ENCODE measurements at regions of chr6 and their contacts with region 1.

Region 1: GRCh38 chr6:15327271-15327670 is 81.4 kb downstream of the JARID2 start:
- DNase-seq: peak; percentile 79
- H3K4me3 Mint-ChIP-seq: no peak overlapping the region
- H3K27ac Mint-ChIP-seq: peak overlapping the region; percentile 85
- H3K4me1 Mint-ChIP-seq: peaks cover 88% of the 10 kb centered on the region
- H3K27me3 Mint-ChIP-seq: no peaks in the 10 kb centered on the region

Region 2: DNA sequence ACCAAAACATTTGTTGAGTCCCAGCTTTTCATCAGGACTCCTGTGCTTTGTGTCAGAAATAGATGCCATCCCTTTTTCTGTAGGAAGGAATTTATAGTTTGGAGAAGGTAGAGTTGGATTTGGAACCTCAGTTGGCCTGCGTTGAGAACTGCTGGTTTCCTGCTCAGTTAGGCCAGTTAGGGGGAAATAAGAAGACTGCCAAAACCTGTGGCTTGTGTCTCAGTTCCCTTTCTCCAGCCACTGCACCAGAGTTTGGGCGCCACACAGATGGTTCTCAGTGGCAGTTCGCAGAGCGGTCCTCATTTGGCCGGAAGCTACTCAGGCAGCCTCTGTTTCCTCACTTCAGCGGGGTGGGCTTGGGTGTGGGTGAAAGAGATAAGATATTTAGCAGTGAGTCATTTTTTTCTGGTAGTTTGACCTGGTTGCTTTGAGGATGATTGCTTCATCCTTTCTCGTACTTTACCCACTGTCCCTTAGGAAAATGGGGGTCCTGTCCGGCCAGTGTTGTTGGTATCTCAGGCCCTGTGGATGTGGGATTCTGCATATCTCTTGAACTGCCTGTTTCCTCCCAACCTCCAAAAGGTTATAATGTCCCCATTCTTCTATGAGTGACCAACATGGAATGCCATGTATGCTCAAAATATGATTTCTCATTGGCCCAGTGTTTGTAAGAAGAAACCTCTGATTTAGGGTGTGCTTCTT is 27.7 kb before region 1 on chr6:
- CTCF ChIA-PET with region 1: interaction called, 5 read pairs
- intact Hi-C with region 1: loop called (anchors 2 kb)
- DNase-seq: peak; percentile 36
- H3K4me3 Mint-ChIP-seq: no peak overlapping the region
- H3K27ac Mint-ChIP-seq: no peak overlapping the region
- H3K4me1 Mint-ChIP-seq: peaks cover 82% of the 10 kb centered on the region
- H3K27me3 Mint-ChIP-seq: no peaks in the 10 kb centered on the region

Region 3: GRCh38 chr6:15389765-15390723 is 62.8 kb after region 1 on chr6:
- CTCF ChIA-PET with region 1: interaction called, 6 read pairs
- intact Hi-C with region 1: loop called (anchors 2 kb)
- DNase-seq: peak; percentile 25
- H3K4me3 Mint-ChIP-seq: no peak overlapping the region
- H3K27ac Mint-ChIP-seq: no peak overlapping the region
- H3K4me1 Mint-ChIP-seq: peaks cover 72% of the 10 kb centered on the region
- H3K27me3 Mint-ChIP-seq: no peaks in the 10 kb centered on the region

Region 4: DNA sequence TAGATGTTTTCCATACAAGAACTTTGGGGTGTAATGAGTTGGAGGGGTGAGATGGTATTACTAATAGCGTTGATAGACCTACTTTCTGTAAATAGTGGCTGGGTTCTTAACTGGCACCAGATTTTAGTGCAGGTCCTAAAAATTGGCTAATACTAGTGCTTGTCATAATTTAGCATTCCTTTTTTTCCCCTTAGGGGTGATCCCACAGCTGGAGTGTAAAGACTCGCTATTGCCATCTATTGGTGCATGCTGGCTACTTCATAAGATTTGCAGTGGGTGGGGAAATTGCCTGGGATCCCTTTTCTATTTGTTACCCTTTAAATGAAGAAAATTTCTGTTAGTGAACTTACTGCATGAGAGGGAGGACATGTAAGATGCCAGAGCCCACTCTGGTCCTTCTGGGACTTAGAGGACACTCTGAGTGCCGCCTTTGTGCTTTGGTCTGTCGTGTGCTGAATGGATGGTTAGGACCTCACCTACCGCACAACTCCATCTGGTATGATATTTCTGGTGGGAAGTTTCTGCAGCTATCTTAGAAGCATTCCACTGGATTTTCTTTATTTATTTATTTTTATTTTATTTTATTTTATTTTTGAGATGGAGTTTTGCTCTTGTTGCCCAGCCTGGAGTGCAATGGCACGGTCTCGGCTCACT is 114.1 kb after region 1 on chr6:
- CTCF ChIA-PET with region 1: interaction called, 5 read pairs
- intact Hi-C with region 1: loop called (anchors 1 kb)
- DNase-seq: peak; percentile 60
- H3K4me3 Mint-ChIP-seq: no peak overlapping the region
- H3K27ac Mint-ChIP-seq: no peak overlapping the region
- H3K4me1 Mint-ChIP-seq: peaks cover 57% of the 10 kb centered on the region
- H3K27me3 Mint-ChIP-seq: no peaks in the 10 kb centered on the region

Region 5: DNA sequence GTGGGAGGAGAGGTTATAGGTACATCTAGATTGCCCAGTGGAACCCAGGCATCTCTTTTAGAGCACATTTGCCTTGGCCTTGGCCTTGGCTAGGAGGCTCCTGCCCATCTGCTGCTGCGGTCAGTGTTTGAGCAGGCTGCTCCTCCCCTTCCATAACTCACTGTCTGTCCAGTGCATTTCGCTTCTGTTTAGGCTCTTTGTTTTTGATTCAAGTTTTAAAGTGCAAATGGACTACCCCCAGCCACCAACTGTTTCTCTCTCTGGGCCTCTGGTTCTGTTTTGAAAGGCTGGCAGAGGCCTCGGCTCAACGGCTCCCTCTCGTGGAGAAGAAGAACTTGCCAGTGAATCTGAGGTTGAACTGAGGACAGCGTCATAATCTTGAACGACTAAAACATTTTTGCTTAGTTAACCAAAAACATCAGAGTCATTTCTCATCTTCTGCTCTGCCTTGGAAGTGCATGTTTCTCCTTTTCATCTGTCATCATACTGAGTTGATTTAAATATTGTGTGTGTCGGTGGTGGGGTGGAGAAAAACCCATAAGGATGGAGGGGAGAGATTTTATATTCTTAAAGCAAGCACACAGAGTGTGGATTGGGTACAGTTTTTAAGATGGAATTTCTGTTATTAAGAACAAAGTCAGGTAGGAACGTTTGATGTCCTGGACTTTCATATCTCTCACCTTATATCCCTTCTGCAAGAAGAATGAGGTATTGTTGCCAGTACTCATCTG is 164.1 kb after region 1 on chr6:
- CTCF ChIA-PET with region 1: no interaction called
- intact Hi-C with region 1: loop called (anchors 1 kb)
- DNase-seq: peak; percentile 86
- H3K4me3 Mint-ChIP-seq: no peak overlapping the region
- H3K27ac Mint-ChIP-seq: peak overlapping the region; percentile 51
- H3K4me1 Mint-ChIP-seq: peaks cover 36% of the 10 kb centered on the region
- H3K27me3 Mint-ChIP-seq: no peaks in the 10 kb centered on the region

Region 6: DNA sequence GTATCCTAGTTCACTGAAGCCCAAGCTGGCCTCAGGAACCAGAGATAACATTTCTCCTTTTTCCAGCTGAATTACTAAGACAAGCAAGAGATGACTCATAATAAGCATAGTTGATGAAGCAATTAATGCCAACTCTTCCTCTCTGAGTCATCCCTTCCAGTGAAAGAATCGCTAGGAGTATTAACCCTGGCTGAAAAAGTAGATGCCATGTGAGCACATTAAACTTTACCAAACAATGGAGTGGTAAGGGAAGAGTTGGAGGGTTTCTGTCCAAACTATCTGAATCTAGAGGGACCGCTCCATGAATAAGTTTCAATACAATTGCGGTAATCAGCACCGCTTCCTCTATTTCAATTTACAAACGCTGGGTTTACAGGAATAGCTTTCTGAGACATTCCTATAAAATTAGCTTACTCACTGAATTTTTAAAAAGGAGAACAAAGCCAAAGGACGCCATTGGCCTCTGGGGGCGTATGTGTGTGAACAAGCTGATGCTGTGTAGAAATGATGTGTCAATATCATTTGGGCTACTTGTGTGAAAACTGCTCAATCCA is 1385.7 kb after region 1 on chr6:
- CTCF ChIA-PET with region 1: no interaction called
- intact Hi-C with region 1: no loop called
- DNase-seq: peak; percentile 23
- H3K4me3 Mint-ChIP-seq: peak overlapping the region; percentile 51
- H3K27ac Mint-ChIP-seq: peak overlapping the region; percentile 75
- H3K4me1 Mint-ChIP-seq: peaks cover 29% of the 10 kb centered on the region
- H3K27me3 Mint-ChIP-seq: no peaks in the 10 kb centered on the region

Measured in activated naive CD4-positive, alpha-beta T cell treated with anti-CD3 and anti-CD28 coated beads for 36 hours (primary cell).